Calu3 (cell line): ENCODE measurements at regions of chr14 and their contacts with region 1.

Region 1: GRCh38 chr14:74362361-74362915 is 14.2 kb downstream of the VRTN start:
- DNase-seq: peak; percentile 79
- H3K4me3 Mint-ChIP-seq: no peak overlapping the region
- H3K27ac Mint-ChIP-seq: no peak overlapping the region
- H3K4me1 Mint-ChIP-seq: no peaks in the 10 kb centered on the region
- H3K27me3 Mint-ChIP-seq: peaks cover 74% of the 10 kb centered on the region
- CTCF ChIP-seq: peak; percentile 76

Region 2: GRCh38 chr14:74478996-74479635 is 116.7 kb after region 1 on chr14:
- CTCF ChIA-PET with region 1: no interaction called
- intact Hi-C with region 1: loop called (anchors 1 kb)
- DNase-seq: peak; percentile 19
- H3K4me3 Mint-ChIP-seq: no peak overlapping the region
- H3K27ac Mint-ChIP-seq: no peak overlapping the region
- H3K4me1 Mint-ChIP-seq: no peaks in the 10 kb centered on the region
- H3K27me3 Mint-ChIP-seq: no peaks in the 10 kb centered on the region
- CTCF ChIP-seq: no peak